ENCODE measurements at regions of chr22 and their contacts with region 1.

Region 1: GRCh38 chr22:31290494-31291471 is 1.5 kb downstream of the PIK3IP1 start:
- DNase-seq: peak; percentile 99
- H3K4me3 Mint-ChIP-seq: peak overlapping the region; percentile 99
- H3K27ac Mint-ChIP-seq: peak overlapping the region; percentile 100
- H3K4me1 Mint-ChIP-seq: peaks cover 64% of the 10 kb centered on the region
- H3K27me3 Mint-ChIP-seq: no peaks in the 10 kb centered on the region

Region 2: DNA sequence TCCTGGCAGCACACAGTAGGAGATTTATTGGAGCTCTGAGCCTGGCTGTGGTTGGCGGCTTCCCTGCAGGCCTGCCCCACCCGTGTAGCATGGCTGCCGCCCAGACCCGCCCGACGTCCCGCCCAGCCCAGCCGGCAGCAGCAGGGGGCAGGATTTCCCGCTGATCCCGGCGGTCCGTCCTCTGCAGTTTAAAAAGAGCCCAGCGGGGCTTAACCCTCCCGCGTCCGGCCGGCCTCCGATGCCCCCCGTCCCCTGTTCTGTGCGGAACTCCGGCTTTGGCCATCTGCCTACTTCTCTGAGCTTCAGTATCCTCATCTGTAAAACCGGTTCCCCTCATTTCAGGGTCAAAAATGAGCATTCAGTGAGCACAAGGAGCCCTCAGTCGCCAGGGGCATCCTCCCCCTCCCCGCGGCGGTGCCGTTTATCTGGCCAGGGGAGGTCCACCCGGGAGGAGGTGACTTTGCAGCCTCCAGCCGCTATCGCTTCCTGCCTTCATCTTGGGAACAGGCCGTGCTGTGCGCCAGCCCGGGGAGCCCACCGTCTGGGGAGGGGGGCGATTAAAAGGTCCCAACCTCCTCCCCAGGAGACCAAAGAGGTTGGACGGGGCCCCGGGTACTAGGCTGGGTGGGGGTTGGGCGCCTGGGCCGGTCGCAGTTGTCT is 1984.5 kb before region 1 on chr22 and contains the start of gene GAS2L1:
- intact Hi-C with region 1: loop called (anchors 5 kb)
- DNase-seq: peak; percentile 87
- H3K4me3 Mint-ChIP-seq: peak within 1 kb of the TSS; percentile 83
- H3K27ac Mint-ChIP-seq: peak within 1 kb of the TSS; percentile 58
- H3K4me1 Mint-ChIP-seq: peaks cover 5% of the 10 kb centered on the region
- H3K27me3 Mint-ChIP-seq: peaks cover 10% of the 10 kb centered on the region
- total RNA-seq, gene GAS2L1: 1.5 and 2.6 TPM in 2 replicates

Region 3: GRCh38 chr22:31080848-31081649 is 209.7 kb before region 1 on chr22 and contains the start of gene SMTN:
- intact Hi-C with region 1: loop called (anchors 5 kb)
- DNase-seq: peak; percentile 98
- H3K4me3 Mint-ChIP-seq: peak within 1 kb of the TSS; percentile 91
- H3K27ac Mint-ChIP-seq: peak within 1 kb of the TSS; percentile 78
- H3K4me1 Mint-ChIP-seq: peaks cover 35% of the 10 kb centered on the region
- H3K27me3 Mint-ChIP-seq: no peaks in the 10 kb centered on the region
- total RNA-seq, gene SMTN: 13.9 and 17.9 TPM in 2 replicates

Region 4: DNA sequence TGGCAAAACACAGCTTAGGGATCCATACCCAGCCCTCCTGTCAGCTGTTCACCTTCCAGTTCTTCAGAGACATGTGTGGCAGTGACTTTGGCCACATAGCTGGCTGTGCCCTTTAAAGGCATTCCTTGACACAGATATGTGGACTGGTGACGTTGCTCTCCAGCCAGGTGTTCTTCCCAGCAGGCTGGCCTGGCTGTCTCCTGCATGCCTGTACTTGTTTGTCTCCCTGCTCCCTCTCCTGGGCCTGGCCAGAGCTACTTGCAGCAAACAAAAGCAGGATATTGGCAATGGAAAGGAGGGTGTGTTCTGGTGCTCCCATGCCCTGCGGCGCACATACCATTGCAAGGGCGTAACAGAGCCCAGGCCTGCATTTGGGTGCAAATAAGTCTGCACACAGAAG is 36.8 kb before region 1 on chr22:
- intact Hi-C with region 1: no loop called
- DNase-seq: no peak
- H3K4me3 Mint-ChIP-seq: no peak overlapping the region
- H3K27ac Mint-ChIP-seq: no peak overlapping the region
- H3K4me1 Mint-ChIP-seq: peaks cover 9% of the 10 kb centered on the region
- H3K27me3 Mint-ChIP-seq: no peaks in the 10 kb centered on the region

Region 5: DNA sequence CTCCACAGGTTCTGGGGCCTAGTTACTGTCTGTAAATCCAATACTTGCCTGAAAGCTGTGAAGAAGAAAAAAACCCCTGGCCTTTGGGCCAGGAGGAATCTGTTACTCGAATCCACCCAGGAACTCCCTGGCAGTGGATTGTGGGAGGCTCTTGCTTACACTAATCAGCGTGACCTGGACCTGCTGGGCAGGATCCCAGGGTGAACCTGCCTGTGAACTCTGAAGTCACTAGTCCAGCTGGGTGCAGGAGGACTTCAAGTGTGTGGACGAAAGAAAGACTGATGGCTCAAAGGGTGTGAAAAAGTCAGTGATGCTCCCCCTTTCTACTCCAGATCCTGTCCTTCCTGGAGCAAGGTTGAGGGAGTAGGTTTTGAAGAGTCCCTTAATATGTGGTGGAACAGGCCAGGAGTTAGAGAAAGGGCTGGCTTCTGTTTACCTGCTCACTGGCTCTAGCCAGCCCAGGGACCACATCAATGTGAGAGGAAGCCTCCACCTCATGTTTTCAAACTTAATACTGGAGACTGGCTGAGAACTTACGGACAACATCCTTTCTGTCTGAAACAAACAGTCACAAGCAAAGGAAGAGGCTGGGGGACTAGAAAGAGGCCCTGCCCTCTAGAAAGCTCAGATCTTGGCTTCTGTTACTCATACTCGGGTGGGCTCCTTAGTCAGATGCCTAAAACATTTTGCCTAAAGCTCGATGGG is 12.0 kb before region 1 on chr22:
- intact Hi-C with region 1: loop called (anchors 1 kb)
- DNase-seq: peak; percentile 85
- H3K4me3 Mint-ChIP-seq: peak overlapping the region; percentile 66
- H3K27ac Mint-ChIP-seq: peak overlapping the region; percentile 96
- H3K4me1 Mint-ChIP-seq: peaks cover 48% of the 10 kb centered on the region
- H3K27me3 Mint-ChIP-seq: no peaks in the 10 kb centered on the region

Region 6: GRCh38 chr22:31329453-31330215 is 38.9 kb after region 1 on chr22:
- intact Hi-C with region 1: loop called (anchors 5 kb)
- DNase-seq: no peak
- H3K4me3 Mint-ChIP-seq: no peak overlapping the region
- H3K27ac Mint-ChIP-seq: peak overlapping the region; percentile 59
- H3K4me1 Mint-ChIP-seq: peaks cover 14% of the 10 kb centered on the region
- H3K27me3 Mint-ChIP-seq: no peaks in the 10 kb centered on the region

Region 7: GRCh38 chr22:31399211-31400028 is 108.6 kb after region 1 on chr22 and contains the start of gene DRG1:
- intact Hi-C with region 1: loop called (anchors 5 kb)
- DNase-seq: peak; percentile 99
- H3K4me3 Mint-ChIP-seq: peak within 1 kb of the TSS; percentile 100
- H3K27ac Mint-ChIP-seq: peak within 1 kb of the TSS; percentile 94
- H3K4me1 Mint-ChIP-seq: peaks cover 16% of the 10 kb centered on the region
- H3K27me3 Mint-ChIP-seq: peaks cover under 1% of the 10 kb centered on the region
- total RNA-seq, gene DRG1: 114 and 117 TPM in 2 replicates

Region 8: GRCh38 chr22:31537019-31537535 is 246.3 kb after region 1 on chr22:
- intact Hi-C with region 1: loop called (anchors 5 kb)
- DNase-seq: peak; percentile 84
- H3K4me3 Mint-ChIP-seq: peak overlapping the region; percentile 76
- H3K27ac Mint-ChIP-seq: peak overlapping the region; percentile 99
- H3K4me1 Mint-ChIP-seq: peaks cover 54% of the 10 kb centered on the region
- H3K27me3 Mint-ChIP-seq: no peaks in the 10 kb centered on the region

Measured in activated CD4-positive, alpha-beta T cell treated with anti-CD3 and anti-CD28 coated beads, Interleukin-2, amount 10 ng/mL, durations not matched to agents 24 days and 14 days (primary cell).